Activated CD8-positive, alpha-beta T cell treated with anti-CD3 and anti-CD28 coated beads for 36 hours (primary cell): ENCODE measurements at regions of chr7 and their contacts with region 1.

Region 1: DNA sequence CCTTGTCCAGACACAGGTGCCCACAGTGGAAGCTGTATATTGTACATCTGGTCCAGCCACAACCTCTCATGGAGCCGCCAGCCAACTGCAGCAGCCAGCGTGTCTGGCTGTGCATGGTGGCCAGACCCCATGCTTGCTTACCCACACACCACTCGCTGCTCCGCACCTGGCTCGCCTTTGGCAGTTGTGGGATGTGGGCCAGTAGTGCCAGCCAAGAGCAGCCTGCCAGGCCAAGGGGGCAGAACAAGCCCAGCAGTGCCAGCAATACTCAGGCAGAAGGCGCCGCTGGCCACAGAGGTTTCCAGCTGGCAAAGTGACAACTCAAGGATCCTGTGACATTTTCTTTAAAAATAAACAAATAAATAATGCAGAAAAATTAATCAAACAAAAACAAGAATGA is 11.7 kb upstream of the TMEM243 start:
- DNase-seq: no peak
- ATAC-seq: no peak
- H3K4me3 Mint-ChIP-seq: no peak overlapping the region
- H3K27ac Mint-ChIP-seq: no peak overlapping the region
- H3K4me1 Mint-ChIP-seq: peaks cover 7% of the 10 kb centered on the region
- H3K27me3 Mint-ChIP-seq: peaks cover 1% of the 10 kb centered on the region
- CTCF ChIP-seq: no peak

Region 2: DNA sequence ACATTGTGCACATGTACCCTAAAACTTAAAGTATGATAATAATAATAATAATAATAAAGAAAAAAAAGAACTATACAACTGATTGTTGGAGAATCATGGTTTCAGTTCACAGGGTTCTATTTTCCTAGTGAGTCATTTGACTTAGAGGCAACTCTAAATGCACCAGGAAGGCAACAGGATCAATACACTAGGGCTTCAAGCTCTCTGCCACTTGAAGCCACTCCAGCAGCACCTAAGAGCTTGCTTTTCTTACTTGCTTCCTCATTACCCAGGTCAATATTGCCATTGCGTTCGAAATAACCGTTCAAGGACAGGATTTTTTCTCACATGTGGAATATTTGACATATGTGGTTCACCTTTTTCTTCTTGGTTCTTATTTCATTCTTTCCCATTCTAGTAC is 397.9 kb before region 1 on chr7:
- CTCF ChIA-PET with region 1: no interaction called
- POLR2A ChIA-PET with region 1: no interaction called
- intact Hi-C with region 1: no loop called
- DNase-seq: no peak
- ATAC-seq: no peak
- H3K4me3 Mint-ChIP-seq: no peak overlapping the region
- H3K27ac Mint-ChIP-seq: no peak overlapping the region
- H3K4me1 Mint-ChIP-seq: no peaks in the 10 kb centered on the region
- H3K27me3 Mint-ChIP-seq: no peaks in the 10 kb centered on the region
- CTCF ChIP-seq: no peak

Region 3: DNA sequence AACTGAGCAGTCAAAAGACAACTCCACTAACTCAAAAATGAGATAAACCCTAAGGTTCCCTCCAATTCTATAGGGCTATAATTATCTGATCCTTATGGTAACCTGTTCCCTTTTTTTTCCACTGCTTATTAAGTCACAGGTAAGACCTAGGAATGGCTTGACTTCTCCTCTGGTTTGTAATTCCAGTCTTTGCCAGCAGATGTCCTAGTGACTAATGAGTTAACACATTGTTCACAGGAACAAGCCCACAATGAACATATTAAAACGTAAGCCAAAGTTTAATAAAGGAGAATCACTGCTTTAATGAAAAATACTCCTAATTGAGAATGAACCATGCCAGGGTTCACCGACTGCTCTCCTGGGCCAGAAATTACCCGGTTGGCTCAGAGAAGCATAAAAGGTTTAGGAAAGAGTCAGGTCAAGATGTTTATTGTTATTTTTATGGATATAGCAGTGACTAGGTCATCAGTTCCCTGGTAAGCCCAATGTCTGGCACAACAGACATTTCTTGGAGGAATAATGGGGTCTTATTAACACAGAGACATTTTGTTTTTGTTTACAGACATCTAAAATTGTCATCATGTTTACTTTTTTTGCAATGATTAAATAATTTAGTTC is 291.9 kb before region 1 on chr7:
- CTCF ChIA-PET with region 1: interaction called, 5 read pairs
- POLR2A ChIA-PET with region 1: interaction called, 3 read pairs
- intact Hi-C with region 1: loop called (anchors 2 kb)
- DNase-seq: peak; percentile 59
- ATAC-seq: peak; percentile 67
- H3K4me3 Mint-ChIP-seq: no peak overlapping the region
- H3K27ac Mint-ChIP-seq: no peak overlapping the region
- H3K4me1 Mint-ChIP-seq: no peaks in the 10 kb centered on the region
- H3K27me3 Mint-ChIP-seq: no peaks in the 10 kb centered on the region
- CTCF ChIP-seq: peak; percentile 81